ENCODE measurements at regions of chr1 and their contacts with region 1.

Region 1: GRCh38 chr1:154791292-154792166 is 78.6 kb downstream of the KCNN3 start:
- DNase-seq: peak; percentile 69 to 97 (median 85)
- ATAC-seq: peak; percentile 93
- H3K4me3 ChIP-seq: peak overlapping the region in 1 of 2 experiments; percentile 5
- H3K4me3 Mint-ChIP-seq: peak overlapping the region; percentile 73
- H3K27ac ChIP-seq: peak overlapping the region; percentile 10 to 25
- H3K27ac Mint-ChIP-seq: peak overlapping the region; percentile 90
- H3K4me1 ChIP-seq: peaks cover 27% of the 10 kb centered on the region
- H3K4me1 Mint-ChIP-seq: peaks cover 39% of the 10 kb centered on the region
- H3K27me3 ChIP-seq: no peaks in the 10 kb centered on the region
- H3K27me3 Mint-ChIP-seq: no peaks in the 10 kb centered on the region
- CTCF ChIP-seq: peak; percentile 27

Region 2: DNA sequence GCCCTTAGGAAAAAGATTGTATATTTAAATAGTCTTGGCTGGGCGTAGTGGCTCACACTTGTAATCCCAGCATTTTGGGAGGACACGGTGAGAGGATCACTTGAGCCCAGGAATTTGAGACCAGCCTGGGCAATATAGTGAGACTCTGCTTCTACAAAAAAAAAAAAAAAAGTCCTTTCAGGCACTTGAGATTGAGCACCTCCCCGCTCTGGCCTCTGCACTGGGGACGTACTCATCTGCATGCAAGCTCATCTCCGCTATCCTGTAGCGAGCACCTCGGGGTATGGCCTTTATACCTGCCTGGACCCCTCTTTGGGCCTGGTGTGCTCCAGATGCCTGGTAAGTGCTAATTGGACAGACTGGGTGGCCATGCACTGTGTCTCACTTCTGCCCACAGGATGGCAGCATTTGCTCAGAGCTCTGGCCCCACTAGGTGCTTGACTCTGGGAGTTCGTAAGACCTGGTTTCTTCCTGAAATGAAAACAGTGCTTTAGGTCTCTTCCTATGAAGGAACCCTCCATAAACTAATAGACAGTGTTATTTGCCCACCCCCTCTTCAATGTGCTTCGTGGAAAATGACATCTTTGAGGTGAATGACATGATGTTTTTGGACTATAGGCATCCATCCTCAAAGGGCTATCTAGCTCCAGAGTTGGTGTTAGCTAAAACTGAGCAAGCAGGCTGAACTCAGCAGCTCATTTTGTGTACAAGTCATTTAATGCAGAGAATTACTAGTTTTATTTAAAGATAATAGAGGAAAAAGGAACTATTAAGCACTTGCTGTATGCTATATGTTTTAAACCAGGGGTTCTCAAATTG is 121.9 kb before region 1 on chr1:
- CTCF ChIA-PET with region 1: interaction called, 14 read pairs
- POLR2A ChIA-PET with region 1: interaction called, 3 read pairs
- intact Hi-C with region 1: loop called in 1 of 2 experiments (anchors 1 kb)
- DNase-seq: peak; percentile 48 to 86 (median 74)
- ATAC-seq: peak; percentile 100
- H3K4me3 ChIP-seq: no peak overlapping the region
- H3K4me3 Mint-ChIP-seq: no peak overlapping the region
- H3K27ac ChIP-seq: no peak overlapping the region
- H3K27ac Mint-ChIP-seq: no peak overlapping the region
- H3K4me1 ChIP-seq: peaks cover 3% of the 10 kb centered on the region
- H3K4me1 Mint-ChIP-seq: no peaks in the 10 kb centered on the region
- H3K27me3 ChIP-seq: no peaks in the 10 kb centered on the region
- H3K27me3 Mint-ChIP-seq: no peaks in the 10 kb centered on the region
- CTCF ChIP-seq: peak; percentile 80

Region 3: GRCh38 chr1:154765970-154766369 is 25.6 kb before region 1 on chr1:
- CTCF ChIA-PET with region 1: interaction called, 39 read pairs
- POLR2A ChIA-PET with region 1: interaction called, 6 read pairs
- intact Hi-C with region 1: no loop called
- DNase-seq: peak in 2 of 9 experiments; percentile 37 to 51
- ATAC-seq: peak; percentile 68
- H3K4me3 ChIP-seq: no peak overlapping the region
- H3K4me3 Mint-ChIP-seq: no peak overlapping the region
- H3K27ac ChIP-seq: no peak overlapping the region
- H3K27ac Mint-ChIP-seq: no peak overlapping the region
- H3K4me1 ChIP-seq: no peaks in the 10 kb centered on the region
- H3K4me1 Mint-ChIP-seq: peaks cover 2% of the 10 kb centered on the region
- H3K27me3 ChIP-seq: no peaks in the 10 kb centered on the region
- H3K27me3 Mint-ChIP-seq: peaks cover 5% of the 10 kb centered on the region
- CTCF ChIP-seq: no peak

Region 4: DNA sequence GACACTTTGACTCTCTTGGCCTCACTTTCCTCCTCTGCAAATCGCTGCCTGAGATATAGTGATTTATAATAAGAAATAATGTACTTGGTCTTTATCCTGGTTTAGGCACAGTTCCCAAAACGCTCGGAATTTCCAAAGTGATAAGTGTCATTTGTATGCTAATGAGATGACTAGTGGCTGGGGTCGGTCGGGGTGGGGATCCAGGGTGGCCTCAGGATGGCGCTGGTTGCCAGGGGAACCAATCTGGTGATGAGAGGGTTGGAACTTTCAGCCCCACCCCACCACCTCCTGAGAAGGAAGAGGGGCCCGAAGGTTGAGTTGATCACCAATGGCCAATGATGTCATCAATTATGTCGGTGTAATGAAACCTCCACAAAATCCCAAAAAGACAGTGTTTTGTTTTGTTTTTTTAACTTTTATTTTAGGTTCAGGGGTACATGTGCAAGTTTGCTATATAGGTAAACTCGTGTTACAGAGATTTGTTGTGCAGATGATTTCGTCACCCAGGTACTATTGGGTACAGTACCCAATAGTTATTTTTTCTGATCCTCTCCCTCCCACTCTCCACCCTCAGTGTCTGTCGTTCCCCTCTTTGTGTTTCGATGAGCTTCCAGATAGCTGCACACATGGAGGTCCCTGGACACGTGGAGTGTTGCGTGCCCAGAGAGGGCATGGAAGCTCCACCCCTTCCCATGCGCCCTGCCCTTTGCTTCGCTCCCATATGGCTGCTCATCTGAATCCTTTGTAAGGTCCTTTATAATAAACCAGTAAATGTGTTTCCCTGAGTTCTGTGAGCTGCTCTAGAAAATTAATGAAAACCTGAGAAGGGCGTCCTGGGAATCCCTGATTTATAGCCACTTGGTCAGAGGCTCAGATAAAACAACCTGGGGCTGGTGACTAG is 18.7 kb before region 1 on chr1:
- CTCF ChIA-PET with region 1: interaction called, 18 read pairs
- POLR2A ChIA-PET with region 1: interaction called, 3 read pairs
- intact Hi-C with region 1: loop called in 1 of 2 experiments (anchors 2 kb)
- DNase-seq: peak in 7 of 9 experiments; percentile 33 to 64 (median 54)
- ATAC-seq: peak; percentile 62
- H3K4me3 ChIP-seq: no peak overlapping the region
- H3K4me3 Mint-ChIP-seq: no peak overlapping the region
- H3K27ac ChIP-seq: no peak overlapping the region
- H3K27ac Mint-ChIP-seq: no peak overlapping the region
- H3K4me1 ChIP-seq: no peaks in the 10 kb centered on the region
- H3K4me1 Mint-ChIP-seq: peaks cover 2% of the 10 kb centered on the region
- H3K27me3 ChIP-seq: no peaks in the 10 kb centered on the region
- H3K27me3 Mint-ChIP-seq: no peaks in the 10 kb centered on the region
- CTCF ChIP-seq: peak; percentile 28

Region 5: DNA sequence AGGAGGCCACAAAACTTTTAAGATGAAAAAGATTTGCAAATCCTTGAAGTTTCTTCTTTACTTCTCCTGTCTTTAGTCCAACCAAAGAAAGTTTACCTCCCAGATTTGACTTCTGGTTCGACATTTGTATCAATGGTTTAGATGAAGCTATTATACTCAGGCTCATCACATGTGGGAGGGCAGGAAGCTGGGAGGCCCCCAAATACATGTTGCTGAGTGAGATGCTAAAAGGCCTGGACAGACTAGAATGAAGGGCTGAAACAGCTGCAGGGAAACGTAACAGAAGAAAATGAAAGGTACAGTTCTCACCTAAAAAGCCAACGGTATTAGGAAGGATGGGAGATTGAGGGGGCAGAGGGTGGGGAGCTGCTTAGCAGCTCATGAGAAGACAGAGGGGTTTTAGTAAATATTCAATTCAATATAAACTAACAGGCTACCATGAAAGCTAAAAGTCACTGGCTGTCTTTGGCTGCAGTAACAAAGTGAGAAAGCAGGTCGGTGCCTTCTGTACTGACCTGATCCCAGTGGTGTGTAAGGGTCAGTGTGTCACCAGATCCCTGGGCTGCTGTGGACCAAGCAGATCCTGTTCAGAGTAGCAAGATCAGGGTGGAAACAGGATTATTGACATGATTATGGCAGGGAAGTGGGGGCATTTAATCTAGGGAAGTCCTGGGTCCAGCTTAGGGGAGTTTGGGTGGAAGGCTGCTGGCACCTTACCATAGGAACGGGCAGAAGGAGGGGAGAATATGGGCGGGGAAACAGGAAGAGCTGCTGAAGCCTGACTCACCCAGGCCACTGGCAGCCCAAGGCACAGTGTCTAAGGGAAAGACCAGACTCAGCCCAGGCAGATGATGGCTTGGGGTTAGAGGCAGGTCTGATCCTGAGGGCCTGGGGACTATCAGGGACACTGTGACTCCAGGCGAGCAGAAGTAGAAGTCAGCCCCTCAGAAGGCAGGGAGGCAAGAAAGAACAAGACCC is 18.2 kb after region 1 on chr1:
- CTCF ChIA-PET with region 1: no interaction called
- POLR2A ChIA-PET with region 1: no interaction called
- intact Hi-C with region 1: no loop called
- DNase-seq: no peak
- ATAC-seq: no peak
- H3K4me3 ChIP-seq: no peak overlapping the region
- H3K4me3 Mint-ChIP-seq: no peak overlapping the region
- H3K27ac ChIP-seq: no peak overlapping the region
- H3K27ac Mint-ChIP-seq: peak overlapping the region; percentile 33
- H3K4me1 ChIP-seq: no peaks in the 10 kb centered on the region
- H3K4me1 Mint-ChIP-seq: peaks cover 13% of the 10 kb centered on the region
- H3K27me3 ChIP-seq: no peaks in the 10 kb centered on the region
- H3K27me3 Mint-ChIP-seq: peaks cover 3% of the 10 kb centered on the region
- CTCF ChIP-seq: no peak

Region 6: DNA sequence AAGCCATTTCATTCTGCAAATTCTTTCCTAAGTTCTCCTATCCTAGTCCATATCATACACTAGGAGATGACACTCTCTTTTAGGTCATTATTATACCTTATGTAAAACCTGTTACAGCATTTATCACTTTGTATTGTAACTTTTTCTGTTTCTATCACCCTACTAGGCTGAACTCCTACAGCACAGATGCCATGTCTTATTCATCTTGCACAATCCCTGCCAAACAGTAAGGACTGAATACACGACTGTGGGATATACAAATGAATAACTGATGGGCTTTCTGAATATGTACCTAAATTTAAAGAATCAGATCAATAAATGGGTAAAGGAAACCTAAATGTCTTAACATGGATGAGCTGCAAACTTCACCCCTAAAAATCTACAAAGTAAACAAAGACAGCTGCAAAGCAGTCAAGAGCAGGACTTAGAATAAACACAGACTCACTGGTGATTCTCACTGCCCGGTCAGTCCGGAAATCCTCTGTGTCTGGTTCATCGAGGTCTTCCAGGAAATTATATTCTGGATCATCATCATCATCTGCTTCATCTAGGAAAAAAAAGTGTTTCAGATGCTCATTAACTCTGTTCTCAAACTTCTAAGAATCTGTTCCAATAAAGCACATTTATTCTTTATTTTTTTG is 1003.2 kb after region 1 on chr1:
- CTCF ChIA-PET with region 1: no interaction called
- POLR2A ChIA-PET with region 1: no interaction called
- intact Hi-C with region 1: no loop called
- DNase-seq: no peak
- ATAC-seq: no peak
- H3K4me3 ChIP-seq: no peak overlapping the region
- H3K4me3 Mint-ChIP-seq: no peak overlapping the region
- H3K27ac ChIP-seq: no peak overlapping the region
- H3K27ac Mint-ChIP-seq: peak overlapping the region; percentile 52
- H3K4me1 ChIP-seq: no peaks in the 10 kb centered on the region
- H3K4me1 Mint-ChIP-seq: no peaks in the 10 kb centered on the region
- H3K27me3 ChIP-seq: no peaks in the 10 kb centered on the region
- H3K27me3 Mint-ChIP-seq: no peaks in the 10 kb centered on the region
- CTCF ChIP-seq: no peak